Upper lobe of right lung (tissue), 1 donor: ENCODE measurements at regions of chrX and their contacts with region 1.

Region 1: GRCh38 chrX:110713666-110714065 is 82.0 kb downstream of the CHRDL1 start:
- DNase-seq: no peak
- ATAC-seq: no peak
- H3K4me3 ChIP-seq: no peak overlapping the region
- H3K27ac ChIP-seq: no peak overlapping the region
- H3K4me1 ChIP-seq: no peaks in the 10 kb centered on the region
- H3K27me3 ChIP-seq: no peaks in the 10 kb centered on the region
- CTCF ChIP-seq: no peak

Region 2: GRCh38 chrX:110836982-110837381 is 123.3 kb after region 1 on chrX:
- intact Hi-C with region 1: loop called (anchors 10 kb)
- DNase-seq: no peak
- ATAC-seq: no peak
- H3K4me3 ChIP-seq: no peak overlapping the region
- H3K27ac ChIP-seq: no peak overlapping the region
- H3K4me1 ChIP-seq: no peaks in the 10 kb centered on the region
- H3K27me3 ChIP-seq: no peaks in the 10 kb centered on the region
- CTCF ChIP-seq: no peak

Region 3: DNA sequence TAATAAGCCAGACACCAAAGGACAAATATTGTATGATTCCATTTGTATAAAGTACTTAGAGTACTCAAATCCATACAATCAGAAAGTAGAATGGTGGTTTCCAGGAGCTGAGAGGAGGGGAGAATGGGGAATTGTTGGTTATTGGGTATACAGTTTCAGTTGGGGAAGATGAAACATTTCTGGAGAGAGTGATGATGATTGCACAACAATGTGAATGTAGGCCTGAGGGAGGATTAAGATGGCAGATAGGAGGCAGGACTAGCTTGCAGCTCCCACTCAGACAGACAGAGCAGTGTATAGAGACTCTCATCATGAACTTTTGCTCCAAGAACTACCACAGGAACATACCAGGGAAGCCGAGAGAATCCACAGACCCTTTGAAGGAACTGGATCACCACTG is 306.6 kb after region 1 on chrX:
- intact Hi-C with region 1: no loop called
- DNase-seq: no peak
- ATAC-seq: no peak
- H3K4me3 ChIP-seq: no peak overlapping the region
- H3K27ac ChIP-seq: no peak overlapping the region
- H3K4me1 ChIP-seq: no peaks in the 10 kb centered on the region
- H3K27me3 ChIP-seq: no peaks in the 10 kb centered on the region
- CTCF ChIP-seq: no peak